ENCODE measurements at regions of chr19 and their contacts with region 1.

Region 1: GRCh38 chr19:21396893-21397572 is at the start of gene ZNF493:
- DNase-seq: peak; percentile 93
- ATAC-seq: peak; percentile 100
- H3K4me3 ChIP-seq: peak within 1 kb of the TSS; percentile 63 to 96 (median 75)
- H3K4me3 Mint-ChIP-seq: peak within 1 kb of the TSS; percentile 94
- H3K27ac ChIP-seq: peak within 1 kb of the TSS; percentile 62 to 64
- H3K27ac Mint-ChIP-seq: peak within 1 kb of the TSS; percentile 88
- H3K4me1 ChIP-seq: peaks cover 12 to 15% of the 10 kb centered on the region in 2 donors
- H3K4me1 Mint-ChIP-seq: peaks cover 23% of the 10 kb centered on the region
- H3K27me3 ChIP-seq: no peaks in the 10 kb centered on the region
- H3K27me3 Mint-ChIP-seq: no peaks in the 10 kb centered on the region
- CTCF ChIP-seq: no peak
- total RNA-seq, gene ZNF493: 79.0 and 85.3 TPM in 2 replicates

Region 2: DNA sequence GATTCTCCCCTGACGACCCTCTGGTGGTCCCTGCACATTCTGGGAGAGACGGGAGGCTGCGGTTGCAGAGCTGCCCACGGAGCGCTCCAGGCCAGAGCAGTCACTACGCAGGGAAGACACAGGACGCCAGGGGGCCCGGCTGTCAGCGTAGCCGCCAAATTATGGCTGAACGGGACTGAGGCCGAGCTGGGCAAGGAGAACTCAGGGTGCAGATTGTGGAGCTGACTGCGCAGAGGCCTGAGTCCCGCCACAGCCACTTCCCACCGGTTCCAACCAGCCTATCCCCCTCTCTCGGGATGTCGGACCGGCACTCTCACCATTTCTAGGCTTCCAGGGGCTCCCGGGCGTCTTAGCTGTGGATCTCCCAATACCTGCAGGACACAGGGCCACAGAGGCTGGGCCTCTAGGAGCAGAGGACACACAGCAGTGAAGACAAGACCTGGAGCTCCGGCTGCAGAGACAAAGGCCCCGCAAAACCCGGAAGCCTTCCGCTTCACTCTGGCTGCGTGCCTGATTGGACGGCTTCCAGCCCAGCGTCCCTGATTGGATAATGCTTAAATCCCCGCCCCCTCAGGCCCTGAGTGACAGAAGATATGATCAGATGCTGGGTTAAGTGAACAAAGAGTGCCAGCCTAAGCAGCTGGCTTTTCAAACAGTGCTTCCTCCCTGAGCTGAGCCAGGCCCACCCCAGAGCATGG is 831.6 kb before region 1 on chr19 and contains the start of gene ZNF737:
- CTCF ChIA-PET with region 1: no interaction called
- POLR2A ChIA-PET with region 1: interaction called, 15 read pairs
- intact Hi-C with region 1: no loop called
- DNase-seq: peak; percentile 93
- ATAC-seq: peak; percentile 92
- H3K4me3 ChIP-seq: peak within 1 kb of the TSS; percentile 38 to 87 (median 80)
- H3K4me3 Mint-ChIP-seq: peak within 1 kb of the TSS; percentile 98
- H3K27ac ChIP-seq: peak within 1 kb of the TSS; percentile 93 to 96
- H3K27ac Mint-ChIP-seq: peak within 1 kb of the TSS; percentile 99
- H3K4me1 ChIP-seq: peaks cover 6 to 15% of the 10 kb centered on the region in 2 donors
- H3K4me1 Mint-ChIP-seq: peaks cover 32% of the 10 kb centered on the region
- H3K27me3 ChIP-seq: no peaks in the 10 kb centered on the region
- H3K27me3 Mint-ChIP-seq: no peaks in the 10 kb centered on the region
- CTCF ChIP-seq: no peak
- total RNA-seq, gene ZNF737: 45.6 and 50.1 TPM in 2 replicates

Region 3: GRCh38 chr19:21141787-21142464 is 255.1 kb before region 1 on chr19 and contains the start of gene ZNF431:
- CTCF ChIA-PET with region 1: no interaction called
- POLR2A ChIA-PET with region 1: no interaction called
- intact Hi-C with region 1: loop called (anchors 2 kb)
- DNase-seq: peak; percentile 92
- ATAC-seq: peak; percentile 99
- H3K4me3 ChIP-seq: peak within 1 kb of the TSS; percentile 38 to 90 (median 78)
- H3K4me3 Mint-ChIP-seq: peak within 1 kb of the TSS; percentile 98
- H3K27ac ChIP-seq: peak within 1 kb of the TSS; percentile 80
- H3K27ac Mint-ChIP-seq: peak within 1 kb of the TSS; percentile 95
- H3K4me1 ChIP-seq: peaks cover 6 to 10% of the 10 kb centered on the region in 2 donors
- H3K4me1 Mint-ChIP-seq: peaks cover 27% of the 10 kb centered on the region
- H3K27me3 ChIP-seq: no peaks in the 10 kb centered on the region
- H3K27me3 Mint-ChIP-seq: no peaks in the 10 kb centered on the region
- CTCF ChIP-seq: no peak
- total RNA-seq, gene ZNF431: 40.7 and 50.0 TPM in 2 replicates

Region 4: DNA sequence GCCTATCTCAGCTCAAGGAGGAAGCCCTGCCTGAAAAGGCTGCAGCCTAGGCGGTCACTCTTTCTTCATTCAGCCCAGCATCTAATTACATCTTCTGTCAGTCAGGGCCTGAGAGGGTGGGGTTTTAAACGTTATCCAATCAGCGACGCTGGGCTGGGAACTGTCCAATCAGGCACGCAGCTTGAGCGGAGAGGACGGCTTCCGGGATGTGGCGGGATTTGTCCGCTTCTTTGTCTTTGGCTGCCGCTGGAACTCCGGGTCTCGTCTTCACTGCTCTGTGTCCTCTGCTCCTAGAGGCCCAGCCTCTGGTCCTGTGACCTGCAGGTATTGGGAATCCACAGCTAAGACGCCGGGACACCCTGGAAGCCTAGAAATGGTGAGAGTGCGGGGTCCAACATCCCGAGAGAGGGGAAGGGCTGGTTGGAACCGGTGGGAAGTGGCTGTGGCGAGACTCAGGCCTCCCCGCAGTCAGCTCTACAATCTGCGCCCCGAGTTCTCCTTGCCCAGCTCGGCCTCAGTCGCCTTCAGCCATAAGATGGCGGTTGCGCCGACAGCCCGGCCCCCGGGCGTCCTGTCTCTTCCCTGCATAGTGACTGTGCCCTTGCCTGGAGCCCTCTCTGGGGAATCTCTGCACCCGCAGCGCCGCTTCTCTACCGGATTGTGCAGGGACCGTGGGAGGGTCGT is 38.1 kb before region 1 on chr19 and contains the start of gene ZNF738:
- CTCF ChIA-PET with region 1: no interaction called
- POLR2A ChIA-PET with region 1: interaction called, 7 read pairs
- intact Hi-C with region 1: loop called (anchors 1 kb)
- DNase-seq: peak; percentile 89
- ATAC-seq: peak; percentile 97
- H3K4me3 ChIP-seq: peak within 1 kb of the TSS; percentile 70 to 96 (median 88)
- H3K4me3 Mint-ChIP-seq: peak within 1 kb of the TSS; percentile 99
- H3K27ac ChIP-seq: peak within 1 kb of the TSS; percentile 80 to 86
- H3K27ac Mint-ChIP-seq: peak within 1 kb of the TSS; percentile 96
- H3K4me1 ChIP-seq: peaks cover 0 to 4% of the 10 kb centered on the region in 2 donors
- H3K4me1 Mint-ChIP-seq: peaks cover 13% of the 10 kb centered on the region
- H3K27me3 ChIP-seq: no peaks in the 10 kb centered on the region
- H3K27me3 Mint-ChIP-seq: no peaks in the 10 kb centered on the region
- CTCF ChIP-seq: no peak
- total RNA-seq, gene ZNF738: 26.8 and 27.1 TPM in 2 replicates

Region 5: DNA sequence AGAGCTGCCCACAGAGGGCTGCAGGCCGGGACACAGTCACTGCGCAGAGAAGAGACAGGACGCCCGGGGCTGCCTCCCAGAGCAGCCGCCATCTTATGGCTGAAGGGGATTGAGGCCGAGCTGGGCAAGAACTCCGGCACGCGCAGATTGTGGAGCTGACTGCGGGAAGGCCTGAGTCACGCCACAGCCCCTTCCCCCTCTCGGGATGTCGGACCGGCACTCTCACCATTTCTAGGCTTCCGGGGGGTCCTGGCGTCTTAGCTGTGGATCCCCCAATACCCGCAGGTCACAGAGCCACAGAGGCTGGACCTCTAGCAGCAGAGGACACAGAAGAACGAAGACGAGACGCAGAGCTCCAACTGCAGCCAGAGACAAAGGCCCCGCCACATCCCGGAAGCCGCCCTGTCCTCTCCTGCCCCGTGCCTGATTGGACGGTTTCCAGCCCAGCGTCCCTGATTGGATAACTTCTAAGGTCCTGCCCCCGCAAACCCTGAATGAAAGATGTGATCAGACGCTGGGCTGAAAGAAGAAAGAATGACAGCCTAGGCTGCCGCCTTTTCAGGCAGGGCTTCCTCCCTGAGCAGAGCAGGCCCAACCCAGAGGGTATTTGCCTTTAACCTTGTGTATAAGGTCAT is 438.9 kb after region 1 on chr19 and contains the start of gene ZNF43:
- CTCF ChIA-PET with region 1: no interaction called
- POLR2A ChIA-PET with region 1: interaction called, 5 read pairs
- intact Hi-C with region 1: loop called (anchors 10 kb)
- DNase-seq: peak; percentile 92
- ATAC-seq: peak; percentile 98
- H3K4me3 ChIP-seq: peak within 1 kb of the TSS; percentile 61 to 96 (median 74)
- H3K4me3 Mint-ChIP-seq: peak within 1 kb of the TSS; percentile 99
- H3K27ac ChIP-seq: peak within 1 kb of the TSS; percentile 81 to 93
- H3K27ac Mint-ChIP-seq: peak within 1 kb of the TSS; percentile 99
- H3K4me1 ChIP-seq: peaks cover 4 to 17% of the 10 kb centered on the region in 2 donors
- H3K4me1 Mint-ChIP-seq: peaks cover 30% of the 10 kb centered on the region
- H3K27me3 ChIP-seq: no peaks in the 10 kb centered on the region
- H3K27me3 Mint-ChIP-seq: no peaks in the 10 kb centered on the region
- CTCF ChIP-seq: no peak
- total RNA-seq, gene ZNF43: 59.8 and 69.9 TPM in 2 replicates